HepG2 (cell line): ENCODE measurements at regions of chr2 and their contacts with region 1.

Region 1: GRCh38 chr2:178306352-178307073 is 112.2 kb downstream of the OSBPL6 start:
- DNase-seq: peak; percentile 62
- ATAC-seq: peak; percentile 100
- H3K4me3 ChIP-seq: no peak overlapping the region
- H3K27ac ChIP-seq: no peak overlapping the region
- H3K4me1 ChIP-seq: no peaks in the 10 kb centered on the region
- H3K27me3 ChIP-seq: no peaks in the 10 kb centered on the region
- CTCF ChIP-seq: peak; percentile 87
- EP300 ChIP-seq: no peak
- POLR2A ChIP-seq: no peak
- RAD21 ChIP-seq: peak; percentile 68

Region 2: DNA sequence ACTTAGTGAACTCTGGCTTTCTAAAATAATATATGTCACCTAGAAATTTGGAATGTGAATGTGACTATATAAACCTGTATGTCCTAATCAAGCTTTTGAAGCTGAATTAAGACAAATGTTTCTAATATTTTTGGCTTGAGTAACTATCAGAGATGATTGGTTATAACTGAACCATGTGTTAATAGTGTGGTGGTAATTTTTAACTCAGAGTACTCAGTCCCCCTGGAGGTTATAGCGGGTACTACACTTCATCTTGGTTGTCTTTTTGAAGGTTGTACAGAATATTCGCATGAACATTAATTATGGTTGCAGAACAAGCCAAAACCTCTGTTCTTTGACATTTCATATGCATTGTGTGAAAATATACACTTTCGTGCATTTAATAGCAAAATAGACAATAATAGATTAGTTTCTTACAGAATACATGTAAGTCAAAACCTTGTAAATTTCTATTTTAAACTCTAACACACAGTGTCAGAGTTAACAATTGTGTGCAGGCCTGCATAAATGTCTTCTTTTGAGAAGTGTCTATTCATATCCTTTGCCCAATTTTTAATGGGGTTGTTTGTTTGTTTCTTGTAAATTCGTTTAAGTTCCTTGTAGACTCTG is 26.2 kb before region 1 on chr2:
- CTCF ChIA-PET with region 1: no interaction called
- POLR2A ChIA-PET with region 1: no interaction called
- in situ Hi-C with region 1: no loop called
- intact Hi-C with region 1: loop called (anchors 1 kb)
- DNase-seq: peak; percentile 53
- ATAC-seq: peak; percentile 19; the same call in 1 of the 3 replicates
- H3K4me3 ChIP-seq: no peak overlapping the region
- H3K27ac ChIP-seq: no peak overlapping the region
- H3K4me1 ChIP-seq: peaks cover 30% of the 10 kb centered on the region
- H3K27me3 ChIP-seq: no peaks in the 10 kb centered on the region
- CTCF ChIP-seq: peak; percentile 65
- EP300 ChIP-seq: no peak
- POLR2A ChIP-seq: no peak
- RAD21 ChIP-seq: no peak

Region 3: DNA sequence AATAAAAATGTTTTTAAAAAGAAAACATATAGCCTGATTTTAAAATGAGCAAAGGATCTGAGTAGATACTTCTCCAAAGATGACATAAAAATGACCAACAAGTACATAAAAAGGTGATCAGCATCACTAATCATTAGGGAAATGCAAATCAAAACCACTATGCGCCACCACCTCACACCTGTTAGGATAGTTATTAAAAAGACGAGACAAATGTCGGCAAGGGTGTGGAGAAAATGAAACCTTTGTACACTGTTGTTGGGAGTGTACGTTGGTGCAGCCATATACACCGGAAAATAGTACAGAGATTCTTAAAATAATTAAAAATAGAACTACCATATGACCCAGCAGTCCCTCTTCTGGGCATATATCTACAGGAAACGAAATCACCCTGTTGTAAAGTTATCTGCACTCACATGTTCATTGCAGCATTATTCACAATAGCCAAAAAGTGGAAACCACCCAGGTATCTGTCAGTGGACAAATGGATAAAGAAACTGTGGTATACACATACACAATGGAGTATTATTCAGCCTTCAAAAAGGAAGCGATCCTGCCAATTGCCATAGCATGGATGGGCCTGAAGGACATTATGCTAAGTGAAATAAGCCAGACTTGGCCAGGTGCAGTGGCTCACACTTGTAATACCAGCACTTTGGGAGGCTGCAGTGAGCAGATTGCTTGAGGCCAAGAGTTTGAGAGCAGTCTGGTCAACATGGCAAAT is 52.8 kb after region 1 on chr2:
- CTCF ChIA-PET with region 1: no interaction called
- POLR2A ChIA-PET with region 1: no interaction called
- in situ Hi-C with region 1: no loop called
- intact Hi-C with region 1: no loop called
- DNase-seq: no peak
- ATAC-seq: no peak
- H3K4me3 ChIP-seq: no peak overlapping the region
- H3K27ac ChIP-seq: no peak overlapping the region
- H3K4me1 ChIP-seq: no peaks in the 10 kb centered on the region
- H3K27me3 ChIP-seq: no peaks in the 10 kb centered on the region
- CTCF ChIP-seq: no peak
- EP300 ChIP-seq: no peak
- POLR2A ChIP-seq: no peak
- RAD21 ChIP-seq: no peak

Region 4: GRCh38 chr2:178397002-178397605 is 90.6 kb after region 1 on chr2:
- CTCF ChIA-PET with region 1: interaction called, 4 read pairs
- POLR2A ChIA-PET with region 1: no interaction called
- in situ Hi-C with region 1: no loop called
- intact Hi-C with region 1: loop called (anchors 1 kb)
- DNase-seq: peak; percentile 46
- ATAC-seq: peak; percentile 84
- H3K4me3 ChIP-seq: no peak overlapping the region
- H3K27ac ChIP-seq: no peak overlapping the region
- H3K4me1 ChIP-seq: no peaks in the 10 kb centered on the region
- H3K27me3 ChIP-seq: no peaks in the 10 kb centered on the region
- CTCF ChIP-seq: peak; percentile 68
- EP300 ChIP-seq: no peak
- POLR2A ChIP-seq: no peak
- RAD21 ChIP-seq: no peak